ENCODE measurements at regions of chr7 and their contacts with region 1.

Region 1: DNA sequence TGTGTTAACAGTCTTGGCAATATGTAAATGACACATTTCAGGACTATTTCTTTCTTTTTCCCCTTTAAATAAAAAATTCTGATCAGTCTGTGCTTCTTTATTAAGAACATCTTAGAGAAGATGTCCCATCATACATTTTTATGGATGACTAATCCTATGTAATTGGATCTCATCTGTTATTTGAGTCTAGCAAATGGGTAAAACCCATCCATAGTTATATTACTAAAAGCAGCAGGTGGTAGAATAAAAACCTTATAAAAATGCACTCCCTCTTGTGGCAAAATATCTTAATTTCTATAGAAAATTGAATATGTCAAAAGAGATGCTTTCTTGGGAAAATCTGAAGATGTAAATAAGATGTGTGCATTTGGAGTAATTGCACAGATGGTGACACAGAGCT is 35.3 kb downstream of the TRRAP start:
- DNase-seq: no peak
- ATAC-seq: no peak
- H3K4me3 ChIP-seq: no peak overlapping the region
- H3K27ac ChIP-seq: no peak overlapping the region
- H3K4me1 ChIP-seq: no peaks in the 10 kb centered on the region
- H3K27me3 ChIP-seq: no peaks in the 10 kb centered on the region
- CTCF ChIP-seq: no peak

Region 2: DNA sequence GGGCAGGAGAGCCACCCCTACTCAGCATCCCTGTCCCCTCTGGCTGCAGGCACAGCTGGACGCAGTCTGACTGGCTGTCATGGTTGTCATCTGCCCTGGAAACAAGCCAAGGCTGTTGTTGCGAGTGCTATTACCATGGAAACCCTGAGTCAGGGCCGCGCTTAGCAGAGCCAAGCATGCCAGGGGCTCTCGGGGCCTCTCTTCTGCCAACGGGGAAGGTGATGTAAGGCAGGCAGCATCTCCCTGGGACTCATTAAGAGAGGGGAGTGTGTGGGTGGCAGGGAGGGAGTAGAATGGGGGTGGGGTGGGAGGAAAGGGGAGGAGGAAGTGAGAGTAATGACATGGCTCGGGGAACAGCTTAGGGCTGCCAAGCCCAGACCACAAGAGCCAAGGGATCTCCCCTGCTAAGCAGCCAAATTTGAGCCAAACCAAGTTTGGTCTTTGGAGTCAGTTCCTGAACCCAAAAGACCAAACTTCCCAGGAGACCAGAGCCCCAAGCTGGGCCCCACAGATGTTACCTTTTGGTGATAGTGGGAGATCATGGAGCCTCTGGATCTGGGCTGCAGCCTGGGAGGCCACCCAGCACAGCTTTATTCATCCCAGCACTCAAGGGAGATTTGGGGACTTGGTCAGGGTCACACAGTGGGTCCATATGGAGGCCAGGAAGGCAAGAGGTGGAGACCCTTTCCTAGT is 111.4 kb before region 1 on chr7:
- CTCF ChIA-PET with region 1: no interaction called
- POLR2A ChIA-PET with region 1: interaction called, 11 read pairs
- in situ Hi-C with region 1: no loop called
- intact Hi-C with region 1: no loop called
- DNase-seq: no peak
- ATAC-seq: no peak
- H3K4me3 ChIP-seq: no peak overlapping the region
- H3K27ac ChIP-seq: no peak overlapping the region
- H3K4me1 ChIP-seq: no peaks in the 10 kb centered on the region
- H3K27me3 ChIP-seq: no peaks in the 10 kb centered on the region
- CTCF ChIP-seq: no peak

Region 3: DNA sequence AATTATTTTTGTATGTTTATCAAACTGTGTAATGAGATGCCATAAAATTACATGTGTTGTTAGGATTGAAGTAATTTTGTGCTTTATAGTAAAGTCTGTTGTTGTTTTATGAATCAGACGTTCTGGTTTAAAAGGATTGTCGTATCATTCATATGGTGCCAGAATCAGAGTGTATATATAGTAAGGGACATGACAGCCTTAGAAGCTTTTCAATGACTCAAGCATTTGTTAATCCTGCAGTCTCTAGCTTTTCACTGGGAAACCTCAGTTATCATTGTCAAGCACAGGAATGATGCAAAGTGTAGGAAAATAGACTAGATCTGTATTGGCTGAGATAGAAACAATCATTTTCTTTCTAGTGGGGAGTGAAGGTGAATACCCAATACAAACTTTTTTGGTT is 22.2 kb after region 1 on chr7:
- CTCF ChIA-PET with region 1: no interaction called
- POLR2A ChIA-PET with region 1: interaction called, 16 read pairs
- in situ Hi-C with region 1: no loop called
- intact Hi-C with region 1: no loop called
- DNase-seq: no peak
- ATAC-seq: no peak
- H3K4me3 ChIP-seq: no peak overlapping the region
- H3K27ac ChIP-seq: no peak overlapping the region
- H3K4me1 ChIP-seq: no peaks in the 10 kb centered on the region
- H3K27me3 ChIP-seq: no peaks in the 10 kb centered on the region
- CTCF ChIP-seq: no peak

Region 4: GRCh38 chr7:99021941-99022560 is 108.4 kb after region 1 on chr7:
- CTCF ChIA-PET with region 1: no interaction called
- POLR2A ChIA-PET with region 1: no interaction called
- in situ Hi-C with region 1: no loop called
- intact Hi-C with region 1: no loop called
- DNase-seq: no peak
- ATAC-seq: no peak
- H3K4me3 ChIP-seq: no peak overlapping the region
- H3K27ac ChIP-seq: no peak overlapping the region
- H3K4me1 ChIP-seq: peaks cover 3% of the 10 kb centered on the region; the same call in 1 of the 2 replicates
- H3K27me3 ChIP-seq: no peaks in the 10 kb centered on the region
- CTCF ChIP-seq: no peak

Region 5: GRCh38 chr7:99156649-99157048 is 243.0 kb after region 1 on chr7:
- CTCF ChIA-PET with region 1: no interaction called
- POLR2A ChIA-PET with region 1: no interaction called
- in situ Hi-C with region 1: no loop called
- intact Hi-C with region 1: no loop called
- DNase-seq: no peak
- ATAC-seq: no peak
- H3K4me3 ChIP-seq: no peak overlapping the region
- H3K27ac ChIP-seq: no peak overlapping the region
- H3K4me1 ChIP-seq: no peaks in the 10 kb centered on the region
- H3K27me3 ChIP-seq: no peaks in the 10 kb centered on the region
- CTCF ChIP-seq: no peak

Measured in Panc1 (cell line).